ENCODE measurements at regions of chr4 and their contacts with region 1.

Region 1: DNA sequence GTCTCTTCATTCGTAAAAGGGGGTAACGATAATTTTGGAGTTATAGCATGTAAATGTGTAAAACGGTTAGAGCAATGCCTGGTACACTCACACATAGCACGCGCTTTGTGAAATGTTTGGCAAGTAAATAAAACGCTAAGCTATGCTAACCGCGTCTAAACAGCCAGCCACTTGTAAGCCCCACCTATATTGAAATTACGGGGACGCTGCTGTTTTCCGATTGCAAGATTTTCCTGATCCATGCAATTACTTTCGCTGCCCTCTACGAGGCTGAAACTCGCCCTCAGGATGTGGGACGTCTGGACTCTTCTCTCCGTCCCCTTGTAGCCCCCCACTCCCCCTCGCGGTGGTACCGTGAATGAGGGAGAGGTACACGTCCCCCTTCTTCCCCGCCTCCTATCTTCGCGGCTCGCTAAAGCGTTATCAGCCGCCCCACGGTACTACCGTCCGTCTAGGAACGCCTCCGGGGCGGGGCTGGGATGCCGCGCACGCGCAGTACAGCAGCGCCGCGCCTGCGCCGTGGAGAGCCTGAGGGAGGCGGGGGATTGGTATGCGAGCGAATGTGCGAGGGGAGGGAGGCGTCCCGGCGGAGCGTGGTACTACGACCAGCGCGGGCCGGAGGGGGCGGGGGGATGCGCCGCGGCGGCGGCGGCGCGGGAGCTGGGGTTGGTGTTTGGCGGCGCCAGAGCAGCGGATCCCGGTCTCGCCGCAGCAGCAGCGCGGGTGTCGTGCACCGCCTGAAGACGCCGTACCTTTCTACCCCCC is at the start of gene STIM2:
- DNase-seq: peak; percentile 99
- H3K4me3 Mint-ChIP-seq: peak within 1 kb of the TSS; percentile 99
- H3K27ac Mint-ChIP-seq: peak within 1 kb of the TSS; percentile 94
- H3K4me1 Mint-ChIP-seq: peaks cover 44% of the 10 kb centered on the region
- H3K27me3 Mint-ChIP-seq: no peaks in the 10 kb centered on the region
- total RNA-seq, gene STIM2: 37.8 to 40.6 TPM

Region 2: GRCh38 chr4:25913851-25914669 is 946.3 kb before region 1 on chr4 and contains the start of gene SMIM20:
- CTCF ChIA-PET with region 1: no interaction called
- POLR2A ChIA-PET with region 1: no interaction called
- intact Hi-C with region 1: loop called (anchors 1 kb)
- DNase-seq: peak; percentile 93
- H3K4me3 Mint-ChIP-seq: peak within 1 kb of the TSS; percentile 87
- H3K27ac Mint-ChIP-seq: peak within 1 kb of the TSS; percentile 94
- H3K4me1 Mint-ChIP-seq: peaks cover 17% of the 10 kb centered on the region
- H3K27me3 Mint-ChIP-seq: no peaks in the 10 kb centered on the region
- total RNA-seq, gene SMIM20: 26.0 to 28.0 TPM

Region 3: GRCh38 chr4:26319467-26319948 is 540.8 kb before region 1 on chr4:
- CTCF ChIA-PET with region 1: no interaction called
- POLR2A ChIA-PET with region 1: interaction called, 5 read pairs
- intact Hi-C with region 1: loop called (anchors 1 kb)
- DNase-seq: peak; percentile 99
- H3K4me3 Mint-ChIP-seq: peak overlapping the region; percentile 100
- H3K27ac Mint-ChIP-seq: peak overlapping the region; percentile 100
- H3K4me1 Mint-ChIP-seq: peaks cover 35% of the 10 kb centered on the region
- H3K27me3 Mint-ChIP-seq: no peaks in the 10 kb centered on the region

Region 4: GRCh38 chr4:26731351-26732035 is 128.8 kb before region 1 on chr4:
- CTCF ChIA-PET with region 1: no interaction called
- POLR2A ChIA-PET with region 1: no interaction called
- intact Hi-C with region 1: loop called (anchors 5 kb)
- DNase-seq: peak; percentile 11
- H3K4me3 Mint-ChIP-seq: no peak overlapping the region
- H3K27ac Mint-ChIP-seq: no peak overlapping the region
- H3K4me1 Mint-ChIP-seq: peaks cover 11% of the 10 kb centered on the region
- H3K27me3 Mint-ChIP-seq: no peaks in the 10 kb centered on the region

Region 5: GRCh38 chr4:26753617-26754016 is 106.7 kb before region 1 on chr4:
- CTCF ChIA-PET with region 1: no interaction called
- POLR2A ChIA-PET with region 1: no interaction called
- intact Hi-C with region 1: no loop called
- DNase-seq: no peak
- H3K4me3 Mint-ChIP-seq: no peak overlapping the region
- H3K27ac Mint-ChIP-seq: no peak overlapping the region
- H3K4me1 Mint-ChIP-seq: peaks cover 5% of the 10 kb centered on the region
- H3K27me3 Mint-ChIP-seq: no peaks in the 10 kb centered on the region

Region 6: GRCh38 chr4:26803211-26803861 is 57.0 kb before region 1 on chr4:
- CTCF ChIA-PET with region 1: no interaction called
- POLR2A ChIA-PET with region 1: no interaction called
- intact Hi-C with region 1: no loop called
- DNase-seq: no peak
- H3K4me3 Mint-ChIP-seq: no peak overlapping the region
- H3K27ac Mint-ChIP-seq: no peak overlapping the region
- H3K4me1 Mint-ChIP-seq: no peaks in the 10 kb centered on the region
- H3K27me3 Mint-ChIP-seq: no peaks in the 10 kb centered on the region

Region 7: GRCh38 chr4:26878794-26879391 is 18.6 kb after region 1 on chr4:
- CTCF ChIA-PET with region 1: interaction called, 25 read pairs
- POLR2A ChIA-PET with region 1: interaction called, 72 read pairs
- intact Hi-C with region 1: loop called (anchors 1 kb)
- DNase-seq: peak; percentile 47
- H3K4me3 Mint-ChIP-seq: peak overlapping the region; percentile 60
- H3K27ac Mint-ChIP-seq: peak overlapping the region; percentile 99
- H3K4me1 Mint-ChIP-seq: peaks cover 73% of the 10 kb centered on the region
- H3K27me3 Mint-ChIP-seq: no peaks in the 10 kb centered on the region

Region 8: GRCh38 chr4:26992657-26993361 is 132.5 kb after region 1 on chr4:
- CTCF ChIA-PET with region 1: interaction called, 3 read pairs
- POLR2A ChIA-PET with region 1: interaction called, 14 read pairs
- intact Hi-C with region 1: no loop called
- DNase-seq: peak; percentile 46
- H3K4me3 Mint-ChIP-seq: no peak overlapping the region
- H3K27ac Mint-ChIP-seq: no peak overlapping the region
- H3K4me1 Mint-ChIP-seq: peaks cover 25% of the 10 kb centered on the region
- H3K27me3 Mint-ChIP-seq: no peaks in the 10 kb centered on the region

Measured in activated CD4-positive, alpha-beta memory T cell treated with anti-CD3 and anti-CD28 coated beads for 36 hours (primary cell).